Endothelial cell of umbilical vein (primary cell): ENCODE measurements at regions of chr5 and their contacts with region 1.

Region 1: GRCh38 chr5:116002116-116002906 is 30.0 kb upstream of the ARL14EPL start:
- DNase-seq: peak; percentile 6
- H3K4me3 ChIP-seq: no peak overlapping the region
- H3K27ac ChIP-seq: no peak overlapping the region
- H3K4me1 ChIP-seq: no peaks in the 10 kb centered on the region
- H3K27me3 ChIP-seq: no peaks in the 10 kb centered on the region
- CTCF ChIP-seq: no peak
- POLR2A ChIP-seq: no peak

Region 2: DNA sequence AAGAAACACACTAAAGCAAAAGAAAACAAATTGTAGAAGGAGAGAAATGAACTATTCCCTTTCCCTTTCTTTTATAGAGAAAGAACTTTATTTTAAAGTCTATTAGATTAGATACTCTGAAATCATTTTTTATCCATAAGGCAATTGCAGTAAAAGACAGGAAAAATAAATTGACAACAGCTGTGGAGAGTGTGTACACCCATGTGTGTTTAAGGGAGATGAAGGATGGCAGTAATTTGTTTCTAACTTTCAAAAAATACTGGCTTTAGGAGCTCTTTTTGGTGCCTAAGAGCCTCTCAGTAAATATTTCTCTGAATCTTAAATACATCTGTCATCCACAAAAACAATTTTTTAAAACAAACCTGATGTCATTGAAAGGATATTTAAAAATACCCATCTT is 11.6 kb after region 1 on chr5:
- CTCF ChIA-PET with region 1: no interaction called
- POLR2A ChIA-PET with region 1: no interaction called
- dilution Hi-C with region 1: no loop called
- intact Hi-C with region 1: loop called (anchors 2 kb)
- DNase-seq: no peak
- H3K4me3 ChIP-seq: no peak overlapping the region
- H3K27ac ChIP-seq: no peak overlapping the region
- H3K4me1 ChIP-seq: no peaks in the 10 kb centered on the region
- H3K27me3 ChIP-seq: no peaks in the 10 kb centered on the region
- CTCF ChIP-seq: no peak
- POLR2A ChIP-seq: no peak

Region 3: GRCh38 chr5:116025866-116026265 is 23.6 kb after region 1 on chr5:
- CTCF ChIA-PET with region 1: no interaction called
- POLR2A ChIA-PET with region 1: no interaction called
- dilution Hi-C with region 1: no loop called
- intact Hi-C with region 1: no loop called
- DNase-seq: no peak
- H3K4me3 ChIP-seq: no peak overlapping the region
- H3K27ac ChIP-seq: no peak overlapping the region
- H3K4me1 ChIP-seq: no peaks in the 10 kb centered on the region
- H3K27me3 ChIP-seq: no peaks in the 10 kb centered on the region
- CTCF ChIP-seq: no peak
- POLR2A ChIP-seq: no peak